Left cardiac atrium (tissue), 4 donors: ENCODE measurements at regions of chr11 and their contacts with region 1.

Region 1: GRCh38 chr11:61899146-61899841 is 7.9 kb upstream of the FADS3 start:
- DNase-seq: peak; percentile 82
- ATAC-seq: peak; percentile 83 to 85

Region 2: DNA sequence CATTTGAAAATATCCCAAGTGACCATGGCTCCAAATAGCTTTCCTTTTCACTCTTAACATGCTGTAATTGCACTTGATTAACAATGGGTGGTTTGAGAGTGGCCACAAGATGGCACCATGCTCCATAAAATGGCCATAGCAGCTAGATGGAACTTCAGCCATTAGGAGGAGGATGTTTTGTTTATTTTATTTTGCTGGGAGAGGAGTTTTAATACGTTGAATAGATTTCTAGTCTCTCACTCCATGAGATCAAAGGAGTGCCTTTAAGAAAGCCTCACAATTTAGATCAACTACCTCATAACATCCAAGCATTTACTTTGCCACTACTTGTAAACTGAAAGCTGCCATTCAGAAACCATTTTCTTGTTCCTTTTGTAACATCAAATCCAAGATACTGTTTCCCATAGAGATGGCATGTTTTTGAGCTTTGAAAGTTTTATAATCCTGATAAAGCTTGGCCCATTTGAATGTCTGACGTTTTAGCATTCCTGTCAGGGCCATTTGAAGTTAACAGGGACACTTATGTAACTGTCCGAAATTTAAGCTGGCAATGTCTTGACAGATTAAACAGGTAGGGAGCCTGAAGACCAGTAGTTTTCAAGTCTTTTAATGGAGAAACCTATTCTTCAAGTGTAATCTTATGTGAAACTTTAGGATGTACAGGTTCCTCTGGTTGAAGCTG is 101.9 kb before region 1 on chr11:
- intact Hi-C with region 1: loop called in 1 of 2 experiments (anchors 5 kb)
- DNase-seq: peak; percentile 82
- ATAC-seq: peak; percentile 15 to 38